Heart left ventricle (tissue), 16 donors: ENCODE measurements at regions of chr18 and their contacts with region 1.

Region 1: GRCh38 chr18:59402432-59403090 is 43.5 kb upstream of the LMAN1 start:
- DNase-seq: peak; percentile 54 to 75 (median 62)
- ATAC-seq: peak; percentile 69 to 95 (median 92)
- H3K4me3 ChIP-seq: no peak overlapping the region
- H3K27ac ChIP-seq: no peak overlapping the region
- H3K4me1 ChIP-seq: no peaks in the 10 kb centered on the region
- H3K27me3 ChIP-seq: no peaks in the 10 kb centered on the region
- CTCF ChIP-seq: peak; percentile 81 to 96 (median 90)
- POLR2A ChIP-seq: no peak

Region 2: DNA sequence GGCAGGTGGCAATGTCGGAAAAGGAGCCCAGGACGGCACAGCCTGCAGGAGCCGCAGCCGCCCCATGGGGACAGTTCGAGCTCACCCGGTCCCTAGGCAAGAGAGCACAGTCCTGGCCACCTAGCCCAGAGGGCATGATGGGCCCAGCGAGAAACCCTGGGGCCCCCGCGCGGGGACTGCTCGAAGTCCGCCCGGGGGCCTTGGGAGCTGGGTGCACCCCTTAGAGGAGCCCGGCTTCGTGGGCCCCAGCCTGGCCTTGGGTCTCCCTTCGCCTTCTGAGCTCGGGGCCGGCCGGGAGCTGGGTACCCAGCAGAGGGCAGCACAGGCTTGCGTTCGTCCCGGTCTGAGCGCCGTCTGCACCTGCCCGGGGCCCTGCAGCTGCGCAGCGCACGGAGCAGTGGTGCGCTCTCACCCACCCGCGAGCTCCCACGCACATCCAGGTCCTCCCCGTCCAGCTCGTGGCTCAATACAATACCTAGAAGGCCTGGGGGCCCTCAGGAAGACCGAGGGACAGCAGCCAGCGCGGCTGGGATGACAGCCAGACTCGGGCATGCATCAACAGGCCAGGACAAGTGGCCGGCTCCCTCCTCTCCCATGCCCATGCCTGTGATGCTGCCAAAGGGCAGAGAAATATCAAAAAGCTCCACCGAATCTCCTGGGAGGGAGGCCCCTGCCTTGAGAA is 634.1 kb before region 1 on chr18:
- intact Hi-C with region 1: loop called in 1 of 10 experiments (anchors 5 kb)
- DNase-seq: peak; percentile 69 to 89 (median 75)
- ATAC-seq: peak; percentile 65 to 95 (median 92)
- H3K4me3 ChIP-seq: peak overlapping the region in 9 of 12 donors; percentile 15 to 53 (median 35)
- H3K27ac ChIP-seq: peak overlapping the region in 3 of 12 donors; percentile 10 to 40 (median 37)
- H3K4me1 ChIP-seq: peaks cover 0 to 18% (median 10%) of the 10 kb centered on the region in 12 donors
- H3K27me3 ChIP-seq: peaks cover 0 to 4% (median 0%) of the 10 kb centered on the region in 9 donors
- CTCF ChIP-seq: peak; percentile 72 to 91 (median 81)
- POLR2A ChIP-seq: no peak

Region 3: DNA sequence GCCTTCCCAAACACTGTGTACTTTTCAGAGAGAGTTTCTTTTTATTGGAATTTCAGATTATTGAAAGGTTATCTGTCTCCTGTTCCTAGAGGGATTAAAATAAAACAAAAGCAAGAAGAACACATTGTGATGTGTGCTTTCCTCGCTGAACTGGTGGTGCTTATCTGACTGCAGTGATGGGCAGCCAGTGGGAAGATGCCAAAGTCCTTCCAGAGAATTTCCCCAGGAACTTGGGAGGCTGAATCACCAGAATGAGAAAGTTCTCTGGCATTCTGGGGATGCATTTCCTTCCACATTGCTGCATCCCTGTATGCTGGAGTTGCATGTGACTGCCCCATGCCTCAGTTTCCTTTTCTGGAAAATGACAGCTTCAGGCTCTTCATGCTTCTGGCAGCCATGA is 316.8 kb before region 1 on chr18:
- intact Hi-C with region 1: loop called in 5 of 10 experiments (anchors 2 to 10 kb)
- DNase-seq: no peak
- ATAC-seq: no peak
- H3K4me3 ChIP-seq: no peak overlapping the region
- H3K27ac ChIP-seq: no peak overlapping the region
- H3K4me1 ChIP-seq: no peaks in the 10 kb centered on the region
- H3K27me3 ChIP-seq: peaks cover 0 to 15% (median 0%) of the 10 kb centered on the region in 9 donors
- CTCF ChIP-seq: no peak
- POLR2A ChIP-seq: no peak

Region 4: DNA sequence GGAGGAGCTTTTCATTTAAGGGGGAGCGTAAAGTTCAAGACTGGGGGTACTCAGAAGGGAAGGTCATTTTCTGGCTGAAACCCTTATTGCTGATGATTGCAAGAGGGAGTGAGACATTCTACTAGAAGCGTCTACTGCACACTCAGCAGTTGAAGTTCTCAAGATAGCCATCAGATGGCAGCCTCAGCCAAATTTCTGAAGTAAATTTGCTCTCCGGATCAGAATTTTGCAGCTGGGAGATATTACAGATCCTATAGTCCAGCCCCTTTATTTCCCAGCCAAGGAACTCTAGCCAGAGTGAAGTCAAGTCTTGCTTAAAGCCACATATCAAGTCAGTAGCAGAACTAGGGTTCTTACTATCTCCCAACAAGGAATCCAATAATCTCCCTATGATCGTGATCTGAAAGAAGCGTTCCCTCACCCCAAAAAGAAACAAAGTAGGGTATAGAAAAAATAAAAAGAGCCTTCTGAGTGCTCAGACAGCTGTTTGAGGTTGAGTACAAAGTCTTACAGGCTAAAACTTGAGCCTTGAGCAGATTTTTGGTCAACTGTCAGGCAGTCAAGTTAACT is 153.3 kb before region 1 on chr18:
- intact Hi-C with region 1: loop called (anchors 2 to 10 kb)
- DNase-seq: no peak
- ATAC-seq: peak in 2 of 4 donors; percentile 46 to 80
- H3K4me3 ChIP-seq: no peak overlapping the region
- H3K27ac ChIP-seq: no peak overlapping the region
- H3K4me1 ChIP-seq: no peaks in the 10 kb centered on the region
- H3K27me3 ChIP-seq: peaks cover 0 to 39% (median 24%) of the 10 kb centered on the region in 9 donors
- CTCF ChIP-seq: peak; percentile 48 to 74 (median 63)
- POLR2A ChIP-seq: no peak

Region 5: DNA sequence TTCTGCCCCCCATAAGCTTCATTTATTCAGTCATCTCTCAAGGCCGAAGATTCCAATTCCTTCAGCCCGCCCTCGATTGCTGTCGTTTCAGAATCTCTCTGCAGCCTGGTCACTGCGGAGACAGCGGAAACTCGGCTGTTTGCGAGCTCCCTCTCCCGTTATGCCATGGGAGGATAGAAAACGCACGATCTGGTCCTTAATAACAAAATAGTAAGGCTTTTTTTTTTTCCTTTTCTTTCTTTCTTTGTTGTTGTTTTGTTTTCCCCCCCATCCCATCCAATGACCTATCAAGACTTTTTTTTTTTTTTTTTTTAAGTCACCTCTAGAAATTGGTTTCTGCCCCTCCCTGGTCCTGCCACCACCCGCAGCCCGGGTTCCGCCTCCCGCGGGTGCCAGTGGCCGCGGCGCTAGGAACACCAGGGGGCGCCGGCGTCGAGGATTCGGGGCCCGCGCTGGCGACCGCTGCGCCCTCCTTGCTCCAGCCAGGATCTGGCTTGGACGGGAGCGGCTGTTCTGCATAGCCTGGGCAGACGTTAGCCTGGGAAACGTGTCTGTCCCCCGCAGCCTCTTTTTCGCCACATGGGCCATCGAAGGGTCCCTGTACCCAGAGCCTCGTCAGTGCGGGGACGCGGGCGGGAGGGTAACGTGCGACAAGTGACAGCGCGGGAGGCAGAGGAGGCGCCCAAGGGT is 94.2 kb before region 1 on chr18:
- intact Hi-C with region 1: loop called (anchors 2 to 5 kb)
- DNase-seq: peak; percentile 63 to 88 (median 75)
- ATAC-seq: peak; percentile 58 to 99 (median 96)
- H3K4me3 ChIP-seq: peak overlapping the region in 8 of 12 donors; percentile 25 to 49 (median 34)
- H3K27ac ChIP-seq: no peak overlapping the region
- H3K4me1 ChIP-seq: peaks cover 0 to 10% (median 4%) of the 10 kb centered on the region in 12 donors
- H3K27me3 ChIP-seq: peaks cover 0 to 42% (median 11%) of the 10 kb centered on the region in 9 donors
- CTCF ChIP-seq: peak; percentile 72 to 92 (median 79)
- POLR2A ChIP-seq: no peak

Region 6: GRCh38 chr18:59470561-59471121 is 68.1 kb after region 1 on chr18:
- intact Hi-C with region 1: no loop called
- DNase-seq: peak; percentile 36 to 85 (median 69)
- ATAC-seq: peak; percentile 83 to 88 (median 86)
- H3K4me3 ChIP-seq: no peak overlapping the region
- H3K27ac ChIP-seq: peak overlapping the region; percentile 49 to 88 (median 74)
- H3K4me1 ChIP-seq: peaks cover 0 to 20% (median 5%) of the 10 kb centered on the region in 12 donors
- H3K27me3 ChIP-seq: no peaks in the 10 kb centered on the region
- CTCF ChIP-seq: no peak
- POLR2A ChIP-seq: no peak